ENCODE measurements at regions of chr4 and their contacts with region 1.

Region 1: GRCh38 chr4:25986807-25987206 is 72.8 kb downstream of the SMIM20 start:
- DNase-seq: no peak
- H3K4me3 Mint-ChIP-seq: no peak overlapping the region
- H3K27ac Mint-ChIP-seq: no peak overlapping the region
- H3K4me1 Mint-ChIP-seq: peaks cover 16% of the 10 kb centered on the region
- H3K27me3 Mint-ChIP-seq: no peaks in the 10 kb centered on the region

Region 2: DNA sequence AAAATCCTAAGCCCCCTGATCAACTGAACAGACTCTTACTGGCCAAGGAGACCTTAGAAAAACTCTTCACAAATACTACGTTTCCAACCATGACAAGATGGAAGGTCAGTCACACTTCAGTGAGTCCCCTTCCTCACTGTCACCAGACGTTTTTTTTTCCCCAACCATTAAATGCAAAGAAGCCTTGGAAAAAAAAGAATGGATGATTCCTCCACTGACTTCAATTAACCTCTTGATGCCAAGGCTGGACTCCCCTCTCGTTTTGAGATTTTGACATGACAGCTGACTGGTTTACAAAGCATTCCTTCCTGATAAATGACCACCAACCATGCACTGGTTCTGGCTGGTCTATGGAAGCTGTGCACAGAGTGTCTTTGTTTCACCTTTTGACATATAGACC is 257.9 kb before region 1 on chr4:
- CTCF ChIA-PET with region 1: no interaction called
- POLR2A ChIA-PET with region 1: no interaction called
- DNase-seq: no peak
- H3K4me3 Mint-ChIP-seq: no peak overlapping the region
- H3K27ac Mint-ChIP-seq: no peak overlapping the region
- H3K4me1 Mint-ChIP-seq: no peaks in the 10 kb centered on the region
- H3K27me3 Mint-ChIP-seq: no peaks in the 10 kb centered on the region

Region 3: GRCh38 chr4:25903900-25904747 is 82.7 kb before region 1 on chr4:
- CTCF ChIA-PET with region 1: no interaction called
- POLR2A ChIA-PET with region 1: no interaction called
- DNase-seq: no peak
- H3K4me3 Mint-ChIP-seq: no peak overlapping the region
- H3K27ac Mint-ChIP-seq: no peak overlapping the region
- H3K4me1 Mint-ChIP-seq: peaks cover 8% of the 10 kb centered on the region
- H3K27me3 Mint-ChIP-seq: no peaks in the 10 kb centered on the region

Region 4: DNA sequence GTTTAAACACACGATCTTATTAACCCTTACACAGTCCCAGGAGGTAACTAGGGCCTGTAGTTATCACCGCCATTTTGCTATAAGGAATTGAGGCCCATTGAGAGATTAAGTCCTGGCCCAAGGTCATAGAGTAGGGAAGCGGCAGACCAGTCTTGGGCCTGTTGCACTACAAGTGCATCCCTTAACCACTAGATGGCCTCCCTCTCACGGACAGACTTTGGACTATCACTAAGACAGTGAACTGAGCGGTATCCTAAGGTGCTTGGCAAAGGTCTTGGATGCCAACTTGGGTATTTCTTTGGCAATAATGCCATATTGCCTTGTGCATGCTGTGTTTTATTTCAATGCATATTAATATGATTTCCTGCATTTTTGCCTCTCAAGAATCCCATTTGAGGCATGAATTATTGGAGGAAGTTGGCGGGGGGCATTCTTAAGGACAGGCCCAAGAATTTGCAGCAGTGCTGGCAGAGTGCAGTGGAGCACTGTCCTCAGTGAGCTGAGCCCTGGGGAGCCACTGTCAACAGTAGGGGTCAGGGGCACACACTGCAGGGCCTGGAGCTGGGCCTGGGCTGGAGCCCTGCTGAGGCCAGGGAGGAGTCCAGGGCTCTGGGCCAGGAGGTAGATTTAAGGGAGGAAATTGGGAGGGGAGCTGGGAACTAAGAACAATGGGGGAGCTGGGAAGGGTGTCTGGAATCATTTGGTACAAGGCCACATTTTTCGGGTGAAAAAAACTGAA is 74.6 kb after region 1 on chr4:
- CTCF ChIA-PET with region 1: interaction called, 11 read pairs
- POLR2A ChIA-PET with region 1: no interaction called
- DNase-seq: peak; percentile 52
- H3K4me3 Mint-ChIP-seq: no peak overlapping the region
- H3K27ac Mint-ChIP-seq: no peak overlapping the region
- H3K4me1 Mint-ChIP-seq: peaks cover 26% of the 10 kb centered on the region
- H3K27me3 Mint-ChIP-seq: peaks cover 1% of the 10 kb centered on the region

Region 5: GRCh38 chr4:26410385-26411293 is 423.8 kb after region 1 on chr4:
- CTCF ChIA-PET with region 1: interaction called, 32 read pairs
- POLR2A ChIA-PET with region 1: no interaction called
- DNase-seq: no peak
- H3K4me3 Mint-ChIP-seq: no peak overlapping the region
- H3K27ac Mint-ChIP-seq: no peak overlapping the region
- H3K4me1 Mint-ChIP-seq: peaks cover 13% of the 10 kb centered on the region
- H3K27me3 Mint-ChIP-seq: no peaks in the 10 kb centered on the region

Measured in activated CD4-positive, alpha-beta memory T cell treated with anti-CD3 and anti-CD28 coated beads, Interleukin-2, amount 10 ng/mL, durations not matched to agents 7 days and 5 days (primary cell).